Motor neuron (in vitro differentiated cells): ENCODE measurements at regions of chr9 and their contacts with region 1.

Region 1: GRCh38 chr9:94213511-94214124 is 45.5 kb upstream of the ZNF169 start:
- ATAC-seq: peak; percentile 82 to 99 (median 90)
- H3K4me3 ChIP-seq: no peak overlapping the region
- H3K27ac ChIP-seq: no peak overlapping the region
- H3K4me1 ChIP-seq: no peaks in the 10 kb centered on the region

Region 2: DNA sequence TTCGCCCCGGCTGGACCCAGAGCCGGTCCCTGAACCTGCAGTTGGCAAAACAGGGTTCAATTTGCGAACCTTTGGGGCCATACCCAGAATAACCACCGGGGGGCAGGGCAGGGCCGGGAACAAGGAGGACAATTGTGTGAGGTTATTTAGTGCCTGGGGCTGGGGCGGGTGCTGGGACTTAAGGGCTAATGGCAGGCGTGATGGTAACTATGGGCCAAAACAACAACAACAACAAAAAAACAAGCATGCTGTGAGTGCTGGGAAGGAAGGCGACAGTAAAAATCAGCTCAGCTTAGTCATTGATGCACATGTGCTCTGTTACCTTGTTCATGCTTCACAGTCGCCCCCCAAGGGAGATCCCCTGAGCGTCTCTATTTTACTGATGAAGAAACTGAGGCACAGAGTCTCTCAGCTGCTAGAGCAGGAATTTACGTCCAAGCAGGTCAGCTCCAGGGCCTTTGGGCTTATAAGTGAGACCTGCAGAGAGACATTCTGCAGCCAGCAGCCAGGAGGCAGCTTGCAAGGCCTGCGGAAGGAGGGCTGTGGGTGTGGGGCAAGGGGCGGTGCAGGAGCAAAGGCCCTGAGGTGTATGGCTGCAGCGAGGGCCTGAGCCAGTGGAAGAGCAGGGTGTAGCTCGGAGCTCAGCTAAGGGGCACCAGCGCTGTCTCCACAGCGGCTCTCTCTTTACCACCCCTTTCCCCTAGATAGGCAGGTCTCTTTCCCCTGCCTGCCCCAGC is 531.2 kb before region 1 on chr9:
- in situ Hi-C with region 1: loop called in 2 of 9 experiments (anchors 25 kb)
- ATAC-seq: peak; percentile 46 to 93 (median 69)
- H3K4me3 ChIP-seq: no peak overlapping the region
- H3K27ac ChIP-seq: no peak overlapping the region
- H3K4me1 ChIP-seq: no peaks in the 10 kb centered on the region

Region 3: DNA sequence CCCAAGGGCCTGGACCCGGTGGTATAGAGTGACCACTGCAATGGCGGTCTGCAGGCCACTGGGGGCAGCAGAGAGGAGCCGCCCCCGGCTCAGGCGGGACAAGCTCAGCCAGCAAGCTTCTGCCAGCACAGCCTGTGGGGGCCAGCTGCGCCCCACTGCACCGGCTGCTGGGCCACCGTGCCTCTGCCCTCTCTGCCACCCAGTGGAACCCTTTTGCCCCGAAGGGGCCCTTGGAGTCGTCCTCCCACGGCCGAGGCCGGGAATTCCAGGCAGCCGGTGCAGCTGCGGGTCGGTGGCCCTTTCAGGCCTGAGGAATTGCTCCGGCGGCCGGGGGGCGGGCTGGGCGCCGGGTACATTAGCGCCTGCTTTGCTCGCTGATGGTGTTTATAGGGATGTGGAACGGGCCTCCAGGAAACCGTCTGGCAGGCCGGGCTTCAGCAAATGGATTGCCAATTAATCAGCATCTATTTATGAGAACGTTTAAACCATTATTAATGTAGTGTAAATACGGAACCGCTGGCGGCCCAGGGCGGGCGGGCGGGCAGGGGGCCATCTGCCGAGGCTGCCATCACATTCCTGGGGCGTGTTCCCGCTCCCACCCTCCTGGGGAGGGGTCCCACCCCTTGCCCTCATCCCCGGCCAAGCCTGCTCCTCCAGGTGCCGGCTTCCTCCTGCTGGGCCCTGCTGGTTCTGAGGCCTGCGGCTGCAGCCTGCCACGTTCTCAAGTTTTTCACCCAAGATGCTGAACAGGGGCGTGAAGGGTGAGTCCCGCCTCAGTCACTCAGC is 385.9 kb before region 1 on chr9:
- in situ Hi-C with region 1: loop called in 1 of 9 experiments (anchors 25 kb)
- ATAC-seq: peak; percentile 96 to 99 (median 98)
- H3K4me3 ChIP-seq: peak overlapping the region; percentile 12 to 29 (median 24)
- H3K27ac ChIP-seq: peak overlapping the region in 1 of 2 donors; percentile 77
- H3K4me1 ChIP-seq: peaks cover 2 to 13% of the 10 kb centered on the region in 2 donors

Region 4: DNA sequence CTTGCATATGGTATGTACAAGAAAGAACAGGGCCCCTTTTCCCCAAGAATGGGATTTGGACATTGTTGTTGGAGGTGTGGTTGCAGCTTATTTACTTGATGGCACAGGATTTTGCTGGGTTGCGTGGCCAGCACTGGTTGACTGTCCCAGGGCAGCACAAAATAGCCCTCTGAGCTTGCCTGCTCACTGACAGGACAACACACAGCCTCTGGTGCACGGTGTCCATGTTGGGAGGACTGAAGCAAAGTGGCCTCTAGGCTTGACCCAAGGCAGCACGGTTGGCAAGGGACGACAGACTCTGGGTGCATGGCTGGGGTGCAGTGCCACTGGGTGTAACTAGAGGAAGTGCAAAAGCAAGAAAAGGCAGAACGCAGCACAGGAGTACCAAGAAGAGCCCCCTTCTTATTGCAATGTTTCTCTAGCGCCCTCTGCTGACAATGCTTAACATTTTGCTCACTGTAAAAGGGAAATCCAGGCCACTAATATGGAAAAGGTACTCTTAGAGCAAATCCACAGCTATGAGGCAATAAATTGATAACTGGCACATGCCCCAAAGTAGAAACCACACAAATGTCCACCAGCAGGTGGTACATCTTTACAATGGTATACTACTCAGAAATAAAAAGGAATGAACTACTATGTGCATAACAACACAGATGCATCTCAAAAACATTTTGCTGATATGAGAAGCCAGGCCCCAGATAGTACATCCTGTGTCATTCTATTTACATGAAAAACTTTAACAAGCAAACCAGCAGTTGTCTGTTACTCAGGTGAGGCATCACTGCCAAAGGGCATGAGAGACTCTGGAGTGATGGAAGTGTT is 211.1 kb before region 1 on chr9:
- in situ Hi-C with region 1: loop called in 2 of 9 experiments (anchors 25 kb)
- ATAC-seq: peak; percentile 32 to 92 (median 66)
- H3K4me3 ChIP-seq: no peak overlapping the region
- H3K27ac ChIP-seq: no peak overlapping the region
- H3K4me1 ChIP-seq: no peaks in the 10 kb centered on the region

Region 5: GRCh38 chr9:94014065-94014654 is 199.5 kb before region 1 on chr9:
- in situ Hi-C with region 1: loop called in 3 of 9 experiments (anchors 10 to 25 kb)
- ATAC-seq: peak in 3 of 8 experiments; percentile 26 to 74 (median 49)
- H3K4me3 ChIP-seq: no peak overlapping the region
- H3K27ac ChIP-seq: no peak overlapping the region
- H3K4me1 ChIP-seq: peaks cover 0 to 10% of the 10 kb centered on the region in 2 donors